CD8-positive, alpha-beta memory T cell (primary cell): ENCODE measurements at regions of chr11 and their contacts with region 1.

Region 1: GRCh38 chr11:13955971-13956421 is 6.5 kb upstream of the SPON1 start:
- DNase-seq: peak; percentile 22 to 68 (median 51)
- H3K4me3 ChIP-seq: no peak overlapping the region
- H3K4me3 Mint-ChIP-seq: no peak overlapping the region
- H3K27ac ChIP-seq: no peak overlapping the region
- H3K27ac Mint-ChIP-seq: no peak overlapping the region
- H3K4me1 ChIP-seq: peaks cover 9% of the 10 kb centered on the region
- H3K4me1 Mint-ChIP-seq: no peaks in the 10 kb centered on the region
- H3K27me3 ChIP-seq: peaks cover 3% of the 10 kb centered on the region
- H3K27me3 Mint-ChIP-seq: peaks cover 5 to 20% of the 10 kb centered on the region in 2 donors

Region 2: GRCh38 chr11:13942983-13943382 is 13.0 kb before region 1 on chr11:
- CTCF ChIA-PET with region 1: interaction called, 19 read pairs
- POLR2A ChIA-PET with region 1: no interaction called
- DNase-seq: no peak
- H3K4me3 ChIP-seq: no peak overlapping the region
- H3K4me3 Mint-ChIP-seq: no peak overlapping the region
- H3K27ac ChIP-seq: no peak overlapping the region
- H3K27ac Mint-ChIP-seq: peak overlapping the region in 2 of 8 donors; percentile 13 to 26
- H3K4me1 ChIP-seq: peaks cover 47% of the 10 kb centered on the region
- H3K4me1 Mint-ChIP-seq: peaks cover 30 to 62% (median 46%) of the 10 kb centered on the region in 3 donors
- H3K27me3 ChIP-seq: no peaks in the 10 kb centered on the region
- H3K27me3 Mint-ChIP-seq: peaks cover 0 to 4% of the 10 kb centered on the region in 2 donors

Region 3: DNA sequence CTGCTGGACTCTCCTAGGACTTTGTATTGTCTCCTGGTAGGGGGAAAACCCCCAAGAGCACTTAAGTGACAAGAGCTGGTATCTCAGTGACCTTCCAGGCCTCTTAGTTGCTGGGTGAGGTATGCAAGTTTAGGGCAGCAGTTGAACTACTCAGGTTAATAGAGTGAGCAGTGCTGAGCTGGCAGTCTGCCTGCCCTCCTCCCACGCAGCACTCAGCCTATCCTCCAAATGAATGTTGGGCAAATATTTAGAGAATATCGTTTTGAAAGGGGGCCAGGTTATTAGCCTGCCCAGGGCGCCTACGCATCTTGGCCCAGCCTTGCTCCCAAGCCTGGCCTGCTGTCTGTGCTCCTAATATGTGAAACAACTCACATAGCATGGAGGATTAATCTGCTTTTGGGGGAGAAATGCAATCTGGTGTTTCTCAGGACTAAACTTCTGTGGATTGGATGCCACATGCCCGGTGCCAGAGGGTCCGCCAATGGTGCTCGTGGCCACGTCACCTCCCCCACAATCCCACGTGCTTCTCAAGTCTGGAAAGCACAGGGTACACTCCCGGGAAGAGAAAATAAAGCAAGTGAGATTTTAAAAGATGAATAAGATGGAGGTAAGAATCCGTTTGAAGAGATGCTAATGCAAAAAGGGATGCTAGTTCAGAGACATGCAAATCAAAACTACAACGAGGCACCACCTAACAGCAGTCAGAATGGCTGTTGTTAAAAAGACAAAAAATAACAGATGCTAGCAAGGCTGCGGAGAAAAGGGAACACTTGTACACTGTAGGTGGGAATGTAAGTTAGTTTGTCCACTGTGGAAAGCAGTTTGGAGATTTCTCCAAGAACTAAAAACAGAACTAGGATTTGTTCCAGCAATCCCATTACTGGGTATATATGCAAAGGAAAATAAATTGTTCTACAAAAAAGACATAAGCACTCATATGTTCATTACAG is 74.2 kb after region 1 on chr11:
- CTCF ChIA-PET with region 1: no interaction called
- POLR2A ChIA-PET with region 1: no interaction called
- DNase-seq: no peak
- H3K4me3 ChIP-seq: no peak overlapping the region
- H3K4me3 Mint-ChIP-seq: no peak overlapping the region
- H3K27ac ChIP-seq: no peak overlapping the region
- H3K27ac Mint-ChIP-seq: no peak overlapping the region
- H3K4me1 ChIP-seq: no peaks in the 10 kb centered on the region
- H3K4me1 Mint-ChIP-seq: no peaks in the 10 kb centered on the region
- H3K27me3 ChIP-seq: no peaks in the 10 kb centered on the region
- H3K27me3 Mint-ChIP-seq: peaks cover 16 to 27% of the 10 kb centered on the region in 2 donors

Region 4: DNA sequence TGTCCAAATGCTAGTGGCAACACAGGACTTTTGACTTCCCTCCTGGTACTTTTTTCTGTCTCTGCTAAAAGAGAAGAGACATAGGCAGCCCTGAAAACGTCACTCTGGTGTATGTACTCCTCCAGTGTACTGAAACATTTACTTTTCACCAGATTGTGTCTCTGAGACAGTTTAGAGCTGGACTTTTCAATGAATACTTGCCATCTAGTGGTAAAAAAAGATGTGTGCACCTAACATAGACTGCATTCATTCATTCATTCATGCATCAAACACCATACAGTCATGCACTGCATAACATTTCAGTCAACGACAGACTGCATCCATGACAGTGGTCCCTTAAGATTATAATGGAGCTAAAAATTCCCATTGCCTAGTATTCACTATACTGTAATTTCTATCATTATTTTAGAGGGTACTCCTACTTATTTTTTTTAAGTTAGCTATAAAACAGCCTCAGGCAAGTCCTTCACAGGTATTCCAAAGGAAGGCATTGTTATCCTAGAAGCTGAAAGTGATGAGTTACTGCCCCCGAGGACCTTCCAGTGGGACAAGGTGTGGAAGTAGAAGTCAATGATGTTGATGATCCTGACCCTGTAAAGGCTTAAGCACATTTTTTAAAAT is 192.8 kb after region 1 on chr11:
- CTCF ChIA-PET with region 1: interaction called, 30 read pairs
- POLR2A ChIA-PET with region 1: no interaction called
- DNase-seq: peak in 2 of 5 donors; percentile 17 to 48
- H3K4me3 ChIP-seq: no peak overlapping the region
- H3K4me3 Mint-ChIP-seq: no peak overlapping the region
- H3K27ac ChIP-seq: no peak overlapping the region
- H3K27ac Mint-ChIP-seq: peak overlapping the region in 1 of 8 donors; percentile 9
- H3K4me1 ChIP-seq: no peaks in the 10 kb centered on the region
- H3K4me1 Mint-ChIP-seq: peaks cover 0 to 4% (median 3%) of the 10 kb centered on the region in 3 donors
- H3K27me3 ChIP-seq: no peaks in the 10 kb centered on the region
- H3K27me3 Mint-ChIP-seq: peaks cover 1 to 3% of the 10 kb centered on the region in 2 donors

Region 5: DNA sequence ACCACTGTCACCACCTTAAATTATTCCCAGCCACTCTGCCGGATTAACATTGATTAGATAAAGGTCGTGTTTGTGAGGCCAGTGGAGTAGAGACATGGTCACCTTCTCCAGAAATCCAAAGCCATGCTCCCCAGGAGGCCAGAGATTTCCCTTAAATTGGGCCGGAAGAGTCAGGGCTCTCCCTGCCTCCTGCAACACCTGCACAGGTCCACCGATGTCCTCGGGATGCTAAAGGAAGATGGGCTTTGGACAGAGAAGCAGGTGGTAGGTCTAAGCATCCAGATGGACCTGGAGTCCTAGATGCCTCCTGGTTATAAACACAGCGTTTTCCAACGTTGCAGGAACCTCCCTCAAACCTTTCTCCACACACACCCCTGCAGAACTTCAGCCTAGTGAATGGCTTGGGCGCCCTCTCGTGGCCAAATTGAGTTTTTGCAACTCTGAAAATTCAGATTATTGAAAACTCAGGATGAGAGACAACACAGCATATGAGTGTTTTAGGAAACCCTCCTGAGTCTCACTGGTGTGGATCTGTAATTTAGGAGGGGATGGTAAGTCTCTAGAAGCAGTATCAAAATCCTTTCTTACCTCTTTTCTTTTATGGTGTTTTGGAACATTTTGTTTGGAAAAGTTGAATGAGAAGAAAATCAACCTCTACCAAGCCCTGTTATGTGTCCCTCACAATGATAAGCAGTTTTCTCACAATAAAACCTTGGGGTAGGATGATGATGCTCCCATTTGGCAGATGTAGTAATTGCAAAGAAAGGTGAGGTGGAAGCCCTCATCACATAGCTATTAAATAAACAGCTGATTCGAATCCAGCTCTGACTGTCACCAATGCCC is 293.3 kb after region 1 on chr11:
- CTCF ChIA-PET with region 1: interaction called, 15 read pairs
- POLR2A ChIA-PET with region 1: no interaction called
- DNase-seq: peak; percentile 55 to 77 (median 58)
- H3K4me3 ChIP-seq: peak overlapping the region; percentile 13
- H3K4me3 Mint-ChIP-seq: peak overlapping the region; percentile 57 to 85 (median 69)
- H3K27ac ChIP-seq: no peak overlapping the region
- H3K27ac Mint-ChIP-seq: peak overlapping the region in 1 of 8 donors; percentile 11
- H3K4me1 ChIP-seq: peaks cover 13% of the 10 kb centered on the region
- H3K4me1 Mint-ChIP-seq: peaks cover 20 to 29% (median 25%) of the 10 kb centered on the region in 3 donors
- H3K27me3 ChIP-seq: no peaks in the 10 kb centered on the region
- H3K27me3 Mint-ChIP-seq: peaks cover 0 to 6% of the 10 kb centered on the region in 2 donors